ENCODE measurements at regions of chr2 and their contacts with region 1.

Region 1: GRCh38 chr2:182077451-182078142 is 91.9 kb downstream of the PPP1R1C start:
- DNase-seq: peak; percentile 81
- ATAC-seq: peak; percentile 85
- H3K4me3 ChIP-seq: no peak overlapping the region
- H3K27ac ChIP-seq: peak overlapping the region; percentile 26; the same call in 1 of the 2 replicates
- H3K4me1 ChIP-seq: peaks cover 12% of the 10 kb centered on the region in 2 experiments
- H3K27me3 ChIP-seq: no peaks in the 10 kb centered on the region
- CTCF ChIP-seq: peak; percentile 59 to 77 (median 75); a peak in 5 of 6 replicates
- POLR2A ChIP-seq: no peak
- RAD21 ChIP-seq: peak; percentile 94

Region 2: DNA sequence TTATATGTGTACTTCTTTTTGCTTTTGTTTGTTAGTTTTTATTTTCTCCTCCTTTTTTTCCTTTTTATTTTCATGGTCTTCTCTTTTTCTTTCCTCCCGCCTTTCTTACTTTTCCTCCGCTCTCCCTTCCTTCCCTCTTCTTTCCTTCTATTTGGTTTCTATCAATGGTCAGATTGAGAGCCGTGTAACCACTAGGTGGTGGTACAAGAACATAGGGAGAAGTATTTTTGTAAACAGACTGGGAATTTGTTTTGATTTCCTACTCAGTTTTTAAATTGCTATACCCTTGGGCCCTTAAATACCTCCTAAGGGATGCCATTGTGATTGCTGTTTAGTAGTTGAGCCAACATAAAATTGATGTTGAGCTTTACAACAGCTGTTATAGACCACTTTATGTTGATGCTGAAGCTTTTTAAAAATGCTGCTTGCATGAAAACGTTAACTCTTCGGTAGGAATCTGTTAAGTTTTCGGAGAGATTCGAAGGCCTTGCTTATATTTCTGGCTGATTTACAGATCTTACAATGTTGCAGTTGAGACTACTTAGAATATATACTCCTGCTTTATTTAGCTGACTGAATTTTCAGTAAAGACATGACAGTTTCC is 973.0 kb before region 1 on chr2:
- CTCF ChIA-PET with region 1: interaction called, 3 read pairs
- POLR2A ChIA-PET with region 1: no interaction called
- RAD21 ChIA-PET with region 1: no interaction called
- intact Hi-C with region 1: loop called (anchors 10 kb)
- DNase-seq: peak; percentile 51
- ATAC-seq: peak; percentile 57
- H3K4me3 ChIP-seq: no peak overlapping the region
- H3K27ac ChIP-seq: no peak overlapping the region
- H3K4me1 ChIP-seq: peaks cover 28 to 47% of the 10 kb centered on the region in 2 experiments
- H3K27me3 ChIP-seq: no peaks in the 10 kb centered on the region
- CTCF ChIP-seq: peak; percentile 70 to 89 (median 82); a peak in 5 of 6 replicates
- POLR2A ChIP-seq: no peak
- RAD21 ChIP-seq: peak; percentile 92

Region 3: GRCh38 chr2:181573140-181573736 is 504.4 kb before region 1 on chr2:
- CTCF ChIA-PET with region 1: interaction called, 4 read pairs
- POLR2A ChIA-PET with region 1: no interaction called
- RAD21 ChIA-PET with region 1: no interaction called
- intact Hi-C with region 1: loop called (anchors 2 kb)
- DNase-seq: peak; percentile 54
- ATAC-seq: peak; percentile 82
- H3K4me3 ChIP-seq: no peak overlapping the region
- H3K27ac ChIP-seq: no peak overlapping the region
- H3K4me1 ChIP-seq: peaks cover 0 to 5% of the 10 kb centered on the region in 2 experiments; a peak in 2 of 4 replicates
- H3K27me3 ChIP-seq: no peaks in the 10 kb centered on the region
- CTCF ChIP-seq: peak; percentile 49 to 74 (median 68); a peak in 4 of 6 replicates
- POLR2A ChIP-seq: no peak
- RAD21 ChIP-seq: peak; percentile 84

Region 4: DNA sequence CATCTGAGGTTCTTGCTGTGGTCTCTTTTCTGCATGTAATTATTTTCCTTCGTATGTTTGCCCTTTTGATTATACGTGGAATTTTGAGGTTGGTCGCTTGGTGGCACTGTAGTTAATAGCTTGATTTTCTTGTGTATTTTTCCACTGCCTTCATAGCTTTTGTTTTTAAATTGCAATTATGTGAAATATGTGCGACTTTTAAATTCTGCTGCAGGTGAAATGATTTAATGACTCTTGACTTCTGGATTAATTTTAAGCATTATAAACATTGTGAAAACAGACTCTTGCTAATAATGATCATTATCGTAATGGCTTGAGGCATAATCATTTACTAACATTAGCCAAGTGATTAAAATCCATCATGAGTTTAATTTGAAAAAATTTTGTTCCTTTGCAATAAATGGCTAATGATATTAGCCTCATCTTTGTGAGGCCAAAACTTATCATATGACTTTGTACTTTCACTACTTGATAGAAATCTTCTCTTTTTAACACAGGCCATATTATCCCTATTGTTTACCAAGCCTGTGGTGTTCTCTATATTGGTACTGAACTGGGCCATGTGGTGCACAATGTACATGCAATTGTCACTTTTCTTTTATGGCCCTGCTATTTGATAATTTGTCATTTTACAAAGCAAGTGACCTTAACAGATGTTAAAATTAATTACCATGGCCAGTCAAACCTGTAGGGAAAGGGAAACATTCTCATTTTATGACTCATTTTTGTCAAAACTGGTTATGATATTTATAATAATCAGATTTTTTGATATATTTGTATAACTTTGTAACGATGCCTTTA is 334.5 kb before region 1 on chr2:
- CTCF ChIA-PET with region 1: interaction called, 24 read pairs
- POLR2A ChIA-PET with region 1: no interaction called
- RAD21 ChIA-PET with region 1: interaction called in 1 of 2 experiments, 3 read pairs
- intact Hi-C with region 1: loop called (anchors 2 kb)
- DNase-seq: peak; percentile 68
- ATAC-seq: peak; percentile 57
- H3K4me3 ChIP-seq: peak overlapping the region in 1 of 2 experiments; percentile 7; a peak in 1 of 4 replicates
- H3K27ac ChIP-seq: peak overlapping the region; percentile 93
- H3K4me1 ChIP-seq: peaks cover 31 to 63% of the 10 kb centered on the region in 2 experiments
- H3K27me3 ChIP-seq: no peaks in the 10 kb centered on the region
- CTCF ChIP-seq: peak; percentile 47 to 85 (median 60)
- POLR2A ChIP-seq: no peak
- RAD21 ChIP-seq: peak; percentile 93

Region 5: DNA sequence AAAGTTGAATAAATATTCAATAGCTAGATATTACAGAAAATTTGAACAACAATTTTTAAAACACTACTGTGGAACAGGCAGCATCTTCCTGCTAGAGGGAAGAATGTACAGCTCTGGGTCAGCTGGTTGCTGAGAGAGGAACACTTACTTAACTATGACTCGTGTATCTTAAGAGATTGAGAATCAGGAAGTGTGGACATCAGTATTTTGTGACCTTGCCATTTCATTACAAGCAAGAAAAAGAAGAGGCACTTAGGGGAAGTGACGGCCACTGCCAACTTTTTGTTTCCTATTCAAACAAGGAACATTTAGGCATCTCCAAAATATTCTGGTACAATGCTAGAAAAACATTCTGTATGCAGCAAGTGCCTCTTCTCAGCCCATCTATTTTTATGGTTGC is 140.1 kb before region 1 on chr2:
- CTCF ChIA-PET with region 1: interaction called, 4 read pairs
- POLR2A ChIA-PET with region 1: interaction called, 3 read pairs
- RAD21 ChIA-PET with region 1: interaction called in 1 of 2 experiments, 3 read pairs
- intact Hi-C with region 1: loop called (anchors 5 kb)
- DNase-seq: no peak
- ATAC-seq: no peak
- H3K4me3 ChIP-seq: no peak overlapping the region
- H3K27ac ChIP-seq: no peak overlapping the region
- H3K4me1 ChIP-seq: peaks cover 19 to 33% of the 10 kb centered on the region in 2 experiments
- H3K27me3 ChIP-seq: no peaks in the 10 kb centered on the region
- CTCF ChIP-seq: no peak
- POLR2A ChIP-seq: no peak
- RAD21 ChIP-seq: no peak

Measured in HCT116 (cell line).